Astrocyte of the cerebellum (primary cell): ENCODE measurements at regions of chr22 and their contacts with region 1.

Region 1: GRCh38 chr22:22593964-22594656 is 35.0 kb upstream of the PRAME start:
- DNase-seq: peak; percentile 6
- H3K4me3 ChIP-seq: no peak overlapping the region
- CTCF ChIP-seq: peak; percentile 74

Region 2: GRCh38 chr22:22748297-22748743 is 154.2 kb after region 1 on chr22:
- in situ Hi-C with region 1: no loop called
- DNase-seq: peak; percentile 9
- H3K4me3 ChIP-seq: no peak overlapping the region
- CTCF ChIP-seq: peak; percentile 95

Region 3: DNA sequence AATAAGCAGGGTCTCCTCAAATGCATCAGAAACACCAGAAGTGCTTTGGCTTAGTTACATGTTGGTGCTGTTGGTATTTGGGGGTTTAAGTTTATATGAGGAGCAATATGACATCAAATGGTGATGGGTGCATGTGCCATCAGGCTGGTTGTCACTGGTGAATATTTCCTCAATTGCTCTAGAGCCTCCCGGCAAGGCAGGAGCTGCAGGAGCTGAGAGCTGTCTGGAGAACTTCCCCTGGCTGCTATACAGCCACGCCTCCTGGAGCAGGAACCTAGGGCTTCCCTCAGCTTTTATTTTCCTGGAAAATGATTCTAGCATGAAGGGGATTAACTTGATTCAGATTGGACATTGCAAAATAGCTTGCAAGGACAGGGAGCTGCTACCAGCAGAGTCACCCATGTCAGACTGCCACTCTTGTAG is 309.3 kb after region 1 on chr22:
- in situ Hi-C with region 1: loop called (anchors 25 kb)
- DNase-seq: no peak
- H3K4me3 ChIP-seq: no peak overlapping the region
- CTCF ChIP-seq: no peak